ENCODE measurements at regions of chr20 and their contacts with region 1.

Region 1: GRCh38 chr20:47317127-47317895 is 39.2 kb downstream of the ZMYND8 start:
- DNase-seq: peak; percentile 79
- H3K4me3 Mint-ChIP-seq: peak overlapping the region; percentile 22
- H3K27ac Mint-ChIP-seq: peak overlapping the region; percentile 88
- H3K4me1 Mint-ChIP-seq: peaks cover 74% of the 10 kb centered on the region
- H3K27me3 Mint-ChIP-seq: no peaks in the 10 kb centered on the region

Region 2: GRCh38 chr20:47088335-47088734 is 229.0 kb before region 1 on chr20:
- CTCF ChIA-PET with region 1: no interaction called
- intact Hi-C with region 1: no loop called
- DNase-seq: no peak
- H3K4me3 Mint-ChIP-seq: no peak overlapping the region
- H3K27ac Mint-ChIP-seq: no peak overlapping the region
- H3K4me1 Mint-ChIP-seq: no peaks in the 10 kb centered on the region
- H3K27me3 Mint-ChIP-seq: peaks cover 4% of the 10 kb centered on the region

Region 3: DNA sequence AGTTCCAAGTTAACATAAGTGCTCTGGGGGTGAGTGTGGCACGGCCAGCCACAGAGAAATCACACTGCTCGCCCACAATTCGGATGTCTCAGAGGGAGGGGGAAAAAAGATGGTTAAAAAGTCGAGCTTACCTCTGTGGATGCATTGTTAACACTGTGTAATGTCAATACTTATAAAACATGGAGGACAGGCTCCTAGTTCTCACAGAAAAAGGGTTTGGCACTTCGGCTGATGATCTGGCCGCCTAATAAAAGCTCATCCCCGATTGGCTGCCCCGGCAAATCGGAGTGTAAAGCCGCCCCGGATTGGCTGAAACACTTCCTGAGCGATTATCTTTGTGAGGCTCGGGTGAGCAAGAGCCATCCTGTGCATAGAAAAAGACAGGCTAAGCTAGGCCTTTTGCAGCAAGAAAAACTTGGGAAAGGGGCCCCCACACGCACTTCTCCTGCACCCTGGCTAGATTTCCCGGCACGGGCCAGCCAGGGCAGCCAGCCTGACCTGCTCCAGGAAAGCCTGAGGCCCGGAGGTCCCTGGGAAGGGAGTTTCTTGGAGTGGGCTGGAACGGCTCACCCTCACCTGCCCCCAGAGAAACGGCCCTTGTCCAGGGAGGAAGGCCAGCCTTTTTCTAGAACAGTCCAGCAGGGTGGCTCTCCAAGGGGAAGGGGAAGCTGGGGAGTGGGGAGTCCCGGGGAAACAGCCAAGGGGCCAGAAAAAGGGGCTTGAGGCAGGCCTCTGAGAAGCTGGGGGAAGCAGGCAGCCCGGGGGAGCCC is 39.4 kb after region 1 on chr20 and contains the start of gene ZMYND8:
- CTCF ChIA-PET with region 1: interaction called, 6 read pairs
- intact Hi-C with region 1: loop called (anchors 2 kb)
- DNase-seq: peak; percentile 97
- H3K4me3 Mint-ChIP-seq: peak within 1 kb of the TSS; percentile 92
- H3K27ac Mint-ChIP-seq: peak within 1 kb of the TSS; percentile 99
- H3K4me1 Mint-ChIP-seq: peaks cover 52% of the 10 kb centered on the region
- H3K27me3 Mint-ChIP-seq: no peaks in the 10 kb centered on the region
- total RNA-seq, gene ZMYND8: 30.3 to 33.0 TPM

Region 4: DNA sequence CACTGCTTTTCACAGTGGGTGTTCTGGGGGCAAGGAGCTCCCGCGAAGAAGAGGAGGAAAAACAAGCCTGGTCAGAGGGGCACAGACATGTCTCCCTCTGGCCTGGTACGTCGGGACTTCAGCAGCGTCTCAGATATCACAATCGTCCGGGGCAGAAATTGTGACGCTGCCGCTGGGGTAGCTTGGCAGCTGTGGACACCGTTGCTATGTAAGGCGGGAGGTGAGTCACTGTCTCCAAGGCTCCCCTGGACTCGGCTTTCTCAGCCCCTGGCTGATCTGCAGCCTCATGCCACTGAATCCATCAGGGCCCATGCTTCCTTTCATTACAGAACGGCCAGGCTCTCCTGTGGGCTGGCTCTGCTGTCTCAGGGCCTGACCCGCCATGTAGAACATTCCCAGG is 369.2 kb after region 1 on chr20:
- CTCF ChIA-PET with region 1: no interaction called
- intact Hi-C with region 1: no loop called
- DNase-seq: no peak
- H3K4me3 Mint-ChIP-seq: no peak overlapping the region
- H3K27ac Mint-ChIP-seq: no peak overlapping the region
- H3K4me1 Mint-ChIP-seq: no peaks in the 10 kb centered on the region
- H3K27me3 Mint-ChIP-seq: no peaks in the 10 kb centered on the region